Activated CD4-positive, alpha-beta T cell treated with anti-CD3 and anti-CD28 coated beads, Interleukin-2, amount 10 ng/mL, durations not matched to agents 24 days and 14 days (primary cell): ENCODE measurements at regions of chr18 and their contacts with region 1.

Region 1: DNA sequence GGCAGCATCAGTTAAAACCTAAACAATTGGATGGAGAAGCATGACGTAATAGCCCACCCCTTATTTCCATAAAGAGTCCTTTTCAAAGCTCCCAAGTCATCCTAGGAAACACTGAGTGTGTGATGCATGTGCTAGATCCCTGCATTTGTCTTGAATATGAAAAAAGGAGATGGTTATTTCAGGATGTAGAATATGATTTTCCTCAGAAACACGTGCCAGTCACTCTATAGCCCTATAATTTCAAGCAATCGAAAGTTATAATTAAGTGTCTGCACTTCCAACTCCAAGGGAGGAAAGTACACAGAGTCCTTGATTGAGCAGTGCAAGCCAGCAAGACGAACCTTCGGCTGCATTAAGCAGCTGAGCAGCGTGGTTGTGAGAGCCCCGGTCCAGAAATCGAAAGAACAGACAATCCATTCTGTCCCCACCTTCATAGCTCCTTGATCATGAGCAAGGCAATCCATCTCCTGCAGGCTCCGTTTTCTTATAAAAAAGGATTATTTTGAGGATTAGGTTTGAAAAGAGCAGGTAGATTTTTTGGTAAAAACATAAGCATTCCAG is 287.7 kb downstream of the FBXO15 start:
- DNase-seq: no peak
- H3K4me3 Mint-ChIP-seq: no peak overlapping the region
- H3K27ac Mint-ChIP-seq: no peak overlapping the region
- H3K4me1 Mint-ChIP-seq: peaks cover 9% of the 10 kb centered on the region
- H3K27me3 Mint-ChIP-seq: no peaks in the 10 kb centered on the region

Region 2: DNA sequence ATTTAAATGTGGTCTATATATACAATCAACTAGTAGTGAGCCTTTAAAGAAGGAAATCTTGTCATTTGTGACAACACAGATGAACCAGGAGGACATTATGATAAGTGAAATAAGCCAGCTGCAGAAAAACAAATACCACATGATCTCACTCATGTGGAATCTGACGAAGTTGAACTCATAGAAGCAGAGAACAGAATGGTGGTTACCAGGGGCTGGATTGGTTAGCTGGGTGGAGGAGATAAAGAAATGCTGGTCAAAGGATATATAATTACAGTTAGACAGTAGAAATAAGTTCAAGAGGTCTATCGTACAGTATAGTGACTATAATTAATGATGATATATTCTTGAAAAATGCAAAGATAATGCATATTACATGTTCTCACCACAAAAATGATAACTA is 19.8 kb after region 1 on chr18:
- intact Hi-C with region 1: no loop called
- DNase-seq: no peak
- H3K4me3 Mint-ChIP-seq: no peak overlapping the region
- H3K27ac Mint-ChIP-seq: no peak overlapping the region
- H3K4me1 Mint-ChIP-seq: peaks cover 8% of the 10 kb centered on the region
- H3K27me3 Mint-ChIP-seq: no peaks in the 10 kb centered on the region

Region 3: GRCh38 chr18:73913505-73913904 is 53.6 kb after region 1 on chr18:
- intact Hi-C with region 1: loop called (anchors 5 kb)
- DNase-seq: no peak
- H3K4me3 Mint-ChIP-seq: no peak overlapping the region
- H3K27ac Mint-ChIP-seq: no peak overlapping the region
- H3K4me1 Mint-ChIP-seq: no peaks in the 10 kb centered on the region
- H3K27me3 Mint-ChIP-seq: no peaks in the 10 kb centered on the region